Common myeloid progenitor, CD34-positive (primary cell): ENCODE measurements at regions of chr14 and their contacts with region 1.

Region 1: DNA sequence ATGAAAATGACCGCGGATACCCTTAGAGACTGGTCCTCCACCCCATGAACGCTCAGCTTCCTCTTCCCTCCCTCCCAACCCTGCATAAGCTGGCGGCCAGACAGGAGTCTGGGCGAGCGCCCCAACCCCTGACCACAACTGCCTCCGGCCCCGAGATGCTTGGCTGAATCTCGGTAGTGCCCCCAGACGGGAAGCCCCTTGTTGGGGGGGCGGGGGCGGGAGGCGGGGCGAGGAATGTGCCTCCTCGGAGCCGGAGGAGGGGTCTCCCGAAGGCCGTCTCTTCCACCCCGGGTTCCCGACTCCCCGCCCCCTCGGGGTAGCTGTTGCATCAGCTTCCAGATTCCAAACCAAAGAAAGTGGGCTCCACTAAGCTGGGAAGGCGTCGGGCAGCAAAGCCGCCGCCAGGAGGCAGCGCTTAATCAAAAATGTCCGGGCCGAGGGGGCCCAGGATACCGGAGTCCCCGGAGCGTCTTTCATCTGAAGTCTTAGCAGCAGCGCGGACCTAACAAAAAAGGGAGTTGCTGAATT is 7.1 kb upstream of the MRPL52 start:
- DNase-seq: peak; percentile 70 to 74 (median 73)
- H3K4me3 ChIP-seq: peak overlapping the region in 6 of 7 experiments; percentile 20 to 62 (median 42)
- H3K27ac ChIP-seq: no peak overlapping the region
- H3K4me1 ChIP-seq: peaks cover 12 to 38% (median 36%) of the 10 kb centered on the region in 4 experiments
- H3K27me3 ChIP-seq: peaks cover 0 to 29% (median 2%) of the 10 kb centered on the region in 5 experiments

Region 2: DNA sequence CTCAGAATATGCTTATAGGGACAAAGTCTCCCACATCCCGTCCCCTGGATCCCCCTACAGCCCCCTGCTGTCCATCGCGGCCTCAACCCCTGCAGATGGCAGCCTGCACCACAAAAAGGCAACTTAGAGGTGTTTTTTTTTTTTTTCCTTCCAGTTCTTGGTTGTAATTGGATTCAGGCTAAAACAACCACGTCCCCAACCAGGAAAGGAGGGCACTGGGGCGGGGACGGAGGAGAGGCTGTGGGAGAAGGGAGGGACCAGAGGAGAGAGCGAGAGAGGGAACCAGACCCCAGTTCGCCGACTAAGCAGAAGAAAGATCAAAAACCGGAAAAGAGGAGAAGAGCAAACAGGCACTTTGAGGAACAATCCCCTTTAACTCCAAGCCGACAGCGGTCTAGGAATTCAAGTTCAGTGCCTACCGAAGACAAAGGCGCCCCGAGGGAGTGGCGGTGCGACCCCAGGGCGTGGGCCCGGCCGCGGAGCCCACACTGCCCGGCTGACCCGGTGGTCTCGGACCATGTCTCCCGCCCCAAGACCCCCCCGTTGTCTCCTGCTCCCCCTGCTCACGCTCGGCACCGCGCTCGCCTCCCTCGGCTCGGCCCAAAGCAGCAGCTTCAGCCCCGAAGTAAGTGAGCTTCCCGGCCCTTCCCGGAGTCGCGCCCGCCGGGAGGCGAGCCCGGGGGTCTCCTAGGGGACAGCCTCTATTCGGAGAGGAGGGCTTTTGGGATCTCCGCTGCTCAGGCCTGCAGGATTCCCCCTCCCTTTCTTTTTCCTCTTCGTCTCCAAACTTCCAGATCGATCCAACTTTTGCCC is 13.9 kb after region 1 on chr14 and contains the start of gene MMP14:
- CTCF ChIA-PET with region 1: interaction called, 707 read pairs
- POLR2A ChIA-PET with region 1: interaction called, 6 read pairs
- DNase-seq: peak in 1 of 3 donors; percentile 23
- H3K4me3 ChIP-seq: peak within 1 kb of the TSS; percentile 3 to 78 (median 62)
- H3K27ac ChIP-seq: no peak within 1 kb of the TSS
- H3K4me1 ChIP-seq: peaks cover 0 to 37% (median 29%) of the 10 kb centered on the region in 4 experiments
- H3K27me3 ChIP-seq: peaks cover 0 to 39% (median 7%) of the 10 kb centered on the region in 5 experiments

Region 3: DNA sequence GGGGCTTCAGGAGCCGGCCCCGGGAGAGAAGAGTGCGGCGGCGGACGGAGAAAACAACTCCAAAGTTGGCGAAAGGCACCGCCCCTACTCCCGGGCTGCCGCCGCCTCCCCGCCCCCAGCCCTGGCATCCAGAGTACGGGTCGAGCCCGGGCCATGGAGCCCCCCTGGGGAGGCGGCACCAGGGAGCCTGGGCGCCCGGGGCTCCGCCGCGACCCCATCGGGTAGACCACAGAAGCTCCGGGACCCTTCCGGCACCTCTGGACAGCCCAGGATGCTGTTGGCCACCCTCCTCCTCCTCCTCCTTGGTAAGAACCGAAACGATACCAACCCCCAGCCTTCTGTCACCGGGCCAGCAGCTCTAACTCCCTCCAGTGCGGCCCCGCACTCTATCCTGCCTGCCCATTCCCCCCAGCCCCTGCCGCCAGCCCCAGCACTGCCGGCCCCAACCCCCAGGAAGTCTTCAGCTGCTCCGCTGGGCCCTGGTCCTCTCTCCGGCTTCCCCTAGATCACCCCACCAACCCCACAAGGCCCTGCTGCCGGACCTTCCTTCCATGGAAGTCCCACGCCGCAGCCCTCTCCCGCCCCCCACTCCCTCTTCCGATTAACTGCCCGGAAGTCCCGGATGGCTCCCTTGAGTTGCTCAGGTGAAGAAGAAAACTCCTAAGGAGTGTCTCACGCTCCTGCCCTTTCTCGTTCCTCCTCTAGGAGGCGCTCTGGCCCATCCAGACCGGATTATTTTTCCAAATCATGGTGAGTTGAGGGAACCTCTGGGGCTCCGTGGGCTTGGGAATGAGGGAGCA is 49.6 kb after region 1 on chr14:
- CTCF ChIA-PET with region 1: interaction called, 16 read pairs
- POLR2A ChIA-PET with region 1: no interaction called
- DNase-seq: peak; percentile 61 to 65 (median 62)
- H3K4me3 ChIP-seq: peak overlapping the region; percentile 59 to 91 (median 78)
- H3K27ac ChIP-seq: peak overlapping the region; percentile 29 to 82
- H3K4me1 ChIP-seq: peaks cover 8 to 24% (median 22%) of the 10 kb centered on the region in 4 experiments
- H3K27me3 ChIP-seq: peaks cover 0 to 2% (median 0%) of the 10 kb centered on the region in 5 experiments

Region 4: DNA sequence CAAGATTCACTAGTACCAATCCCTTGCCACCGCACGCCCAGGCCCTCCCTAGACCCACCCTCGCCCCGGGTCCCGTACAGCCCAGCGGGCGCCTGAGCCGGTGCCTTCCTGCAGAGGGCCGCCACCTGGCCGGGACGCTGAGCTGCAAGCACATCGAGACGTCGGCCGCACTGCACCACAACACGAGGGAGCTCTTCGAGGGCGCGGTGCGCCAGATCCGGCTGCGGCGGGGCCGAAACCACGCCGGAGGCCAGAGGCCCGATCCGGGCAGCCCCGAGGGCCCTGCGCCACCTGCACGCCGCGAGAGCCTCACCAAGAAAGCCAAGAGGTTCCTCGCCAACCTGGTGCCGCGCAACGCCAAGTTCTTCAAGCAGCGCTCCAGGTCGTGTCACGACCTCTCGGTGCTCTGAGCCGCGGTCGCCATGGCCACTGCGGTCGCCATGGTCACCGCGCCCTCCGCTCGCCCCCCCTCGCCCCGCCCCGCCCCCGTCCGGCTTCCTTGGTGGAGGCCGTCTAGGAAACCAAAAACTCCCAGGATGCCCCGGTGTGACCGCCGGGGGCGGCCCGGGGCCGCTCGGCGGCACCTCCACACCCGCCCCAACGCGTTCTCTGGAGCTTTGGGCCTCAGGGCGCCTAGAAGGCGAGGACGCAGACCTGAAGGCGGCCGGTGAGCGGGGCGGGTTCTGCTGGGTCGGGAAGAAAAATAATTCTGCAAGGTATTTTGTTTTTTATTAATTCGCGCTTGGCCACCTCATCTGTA is 64.0 kb after region 1 on chr14:
- CTCF ChIA-PET with region 1: interaction called, 11 read pairs
- POLR2A ChIA-PET with region 1: no interaction called
- DNase-seq: peak; percentile 67 to 87 (median 79)
- H3K4me3 ChIP-seq: peak overlapping the region in 3 of 7 experiments; percentile 44 to 51 (median 46)
- H3K27ac ChIP-seq: peak overlapping the region in 1 of 2 experiments; percentile 55
- H3K4me1 ChIP-seq: peaks cover 0 to 24% (median 15%) of the 10 kb centered on the region in 4 experiments
- H3K27me3 ChIP-seq: peaks cover 0 to 59% (median 17%) of the 10 kb centered on the region in 5 experiments